ENCODE measurements at regions of chr1 and their contacts with region 1.

Region 1: GRCh38 chr1:28505406-28506187 is at the start of gene RCC1:
- DNase-seq: peak; percentile 89 to 99 (median 94)
- ATAC-seq: peak; percentile 91
- H3K4me3 ChIP-seq: peak within 1 kb of the TSS; percentile 82 to 88
- H3K4me3 Mint-ChIP-seq: peak within 1 kb of the TSS; percentile 95
- H3K27ac ChIP-seq: peak within 1 kb of the TSS; percentile 77 to 85
- H3K27ac Mint-ChIP-seq: peak within 1 kb of the TSS; percentile 94
- H3K4me1 ChIP-seq: peaks cover 31% of the 10 kb centered on the region
- H3K4me1 Mint-ChIP-seq: peaks cover 45% of the 10 kb centered on the region
- H3K27me3 ChIP-seq: no peaks in the 10 kb centered on the region
- H3K27me3 Mint-ChIP-seq: no peaks in the 10 kb centered on the region
- CTCF ChIP-seq: no peak
- total RNA-seq, gene RCC1: 12.5 to 14.4 TPM

Region 2: DNA sequence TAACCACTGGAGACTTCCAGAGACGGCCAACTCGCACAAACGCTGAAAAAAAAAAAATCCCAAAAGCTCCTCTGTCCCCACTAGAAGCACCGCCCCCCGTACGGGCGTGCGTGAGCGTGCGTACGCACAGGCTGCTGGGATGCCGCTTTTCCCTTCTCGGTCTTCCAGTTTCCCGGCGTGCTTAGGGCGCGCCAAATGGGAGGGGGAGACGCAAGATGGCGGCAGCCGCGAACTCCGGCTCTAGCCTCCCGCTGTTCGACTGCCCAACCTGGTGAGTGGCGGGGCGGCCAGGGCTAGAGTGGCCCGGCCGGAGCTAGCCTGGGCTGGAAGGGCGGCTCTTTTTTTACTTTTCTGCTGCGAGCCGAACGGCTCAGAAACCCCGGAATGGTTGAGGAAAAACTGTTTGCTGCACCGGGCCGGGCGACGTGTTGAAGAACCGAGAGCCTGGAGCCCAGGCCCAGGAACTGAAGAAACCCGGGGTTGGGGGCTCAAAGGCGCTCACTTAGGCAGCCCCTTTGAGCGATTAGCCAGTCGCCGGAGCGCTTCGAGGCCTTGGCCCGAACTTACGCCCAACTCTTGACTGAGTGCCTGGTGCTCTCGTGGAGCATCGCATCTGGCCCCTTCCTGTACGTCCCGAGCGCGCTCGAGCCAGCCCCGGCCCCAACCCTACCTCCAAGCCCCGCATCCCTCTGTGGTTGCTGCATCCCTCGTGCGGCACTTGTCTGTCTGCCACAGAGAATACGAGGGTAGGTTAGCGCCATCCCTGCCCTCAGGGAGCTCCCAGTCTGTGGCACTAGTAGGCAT is 674.8 kb before region 1 on chr1 and contains the start of gene PPP1R8:
- CTCF ChIA-PET with region 1: no interaction called
- POLR2A ChIA-PET with region 1: no interaction called
- intact Hi-C with region 1: loop called in 1 of 2 experiments (anchors 5 kb)
- DNase-seq: peak; percentile 69 to 96 (median 90)
- ATAC-seq: peak; percentile 99
- H3K4me3 ChIP-seq: peak within 1 kb of the TSS; percentile 91 to 99
- H3K4me3 Mint-ChIP-seq: peak within 1 kb of the TSS; percentile 91
- H3K27ac ChIP-seq: peak within 1 kb of the TSS; percentile 82 to 88
- H3K27ac Mint-ChIP-seq: peak within 1 kb of the TSS; percentile 91
- H3K4me1 ChIP-seq: peaks cover 25% of the 10 kb centered on the region
- H3K4me1 Mint-ChIP-seq: peaks cover 43% of the 10 kb centered on the region
- H3K27me3 ChIP-seq: no peaks in the 10 kb centered on the region
- H3K27me3 Mint-ChIP-seq: no peaks in the 10 kb centered on the region
- CTCF ChIP-seq: no peak
- total RNA-seq, gene PPP1R8: 24.9 to 25.3 TPM

Region 3: DNA sequence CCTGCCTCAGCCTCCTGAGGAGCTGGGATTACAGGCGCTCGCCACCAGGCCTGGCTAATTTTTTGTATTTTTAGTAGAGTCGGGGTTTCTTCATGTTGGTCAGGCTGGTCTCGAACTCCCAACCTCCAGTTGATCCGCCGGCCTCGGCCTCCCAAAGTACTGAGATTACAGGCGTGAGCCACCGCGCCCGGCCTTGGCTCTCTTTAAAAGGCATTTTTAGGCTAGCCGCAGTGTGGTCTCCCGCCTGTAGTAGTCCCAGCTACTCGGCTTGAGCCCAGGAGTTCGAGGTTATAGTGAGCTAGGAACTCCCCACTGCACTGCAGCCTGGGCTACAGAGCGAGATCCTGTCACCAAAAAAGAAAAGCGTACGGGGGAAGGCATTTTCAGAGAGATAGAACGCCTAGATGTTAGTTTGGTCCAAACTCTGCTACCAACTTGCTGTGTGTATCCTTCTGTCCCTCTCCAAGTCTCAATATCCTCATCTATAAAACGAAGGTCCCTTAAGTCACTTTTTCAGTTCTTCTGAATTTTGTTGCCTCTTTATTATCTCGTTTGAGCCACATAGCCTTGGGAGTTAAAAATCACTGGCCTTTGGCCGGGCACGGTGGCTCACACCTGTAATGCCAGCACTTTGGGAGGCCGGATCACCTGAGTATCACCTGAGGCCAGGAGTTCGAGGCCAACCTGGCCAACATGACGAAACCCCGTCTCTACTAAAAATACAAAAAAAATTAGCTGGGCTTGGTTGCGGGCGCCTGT is 176.0 kb before region 1 on chr1:
- CTCF ChIA-PET with region 1: no interaction called
- POLR2A ChIA-PET with region 1: interaction called, 5 read pairs
- intact Hi-C with region 1: loop called (anchors 1 to 2 kb)
- DNase-seq: peak in 6 of 9 experiments; percentile 18 to 72 (median 46)
- ATAC-seq: peak; percentile 20
- H3K4me3 ChIP-seq: peak overlapping the region; percentile 53 to 57
- H3K4me3 Mint-ChIP-seq: peak overlapping the region; percentile 95
- H3K27ac ChIP-seq: peak overlapping the region; percentile 84 to 86
- H3K27ac Mint-ChIP-seq: peak overlapping the region; percentile 98
- H3K4me1 ChIP-seq: peaks cover 20% of the 10 kb centered on the region
- H3K4me1 Mint-ChIP-seq: peaks cover 34% of the 10 kb centered on the region
- H3K27me3 ChIP-seq: no peaks in the 10 kb centered on the region
- H3K27me3 Mint-ChIP-seq: no peaks in the 10 kb centered on the region
- CTCF ChIP-seq: no peak

Region 4: DNA sequence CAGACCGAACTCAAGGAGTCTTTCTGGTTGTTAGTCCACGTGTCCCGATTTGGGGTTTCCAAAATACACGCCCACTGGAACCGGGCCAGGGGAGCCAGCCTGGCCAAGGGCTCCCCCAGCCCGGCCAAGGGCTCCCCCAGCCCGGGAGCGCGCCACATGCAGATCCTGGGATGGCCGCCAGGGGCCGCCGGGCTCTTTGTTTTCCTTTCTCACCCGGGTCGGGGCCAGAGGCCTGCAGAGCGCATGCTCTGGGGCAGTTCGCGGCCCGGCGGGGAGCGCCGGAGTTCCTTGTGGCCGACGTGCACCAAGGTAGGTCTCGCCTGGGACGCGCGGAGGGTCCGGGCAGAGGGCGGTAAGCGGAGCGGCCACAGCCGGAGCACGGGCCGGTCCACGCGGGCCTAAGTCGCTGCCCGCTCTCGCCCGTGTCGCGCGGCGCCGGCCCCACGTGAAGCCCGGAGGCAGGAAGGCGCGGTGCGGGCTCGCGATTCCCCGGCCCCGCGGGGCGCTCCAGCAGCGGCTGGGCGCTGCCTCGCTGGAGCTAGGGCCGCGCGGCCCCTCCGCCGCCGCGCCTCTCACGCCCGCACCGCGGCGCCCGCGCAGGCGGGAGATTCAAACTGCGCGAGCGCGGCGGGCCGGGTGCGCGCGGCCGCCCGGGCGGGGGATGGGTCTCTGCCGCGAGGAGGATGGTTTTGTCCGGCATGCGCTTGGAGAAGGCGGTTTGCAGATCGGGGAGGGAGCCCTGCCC is 12.6 kb after region 1 on chr1:
- CTCF ChIA-PET with region 1: interaction called, 11 read pairs
- POLR2A ChIA-PET with region 1: interaction called, 14 read pairs
- intact Hi-C with region 1: loop called (anchors 1 kb)
- DNase-seq: peak; percentile 76 to 93 (median 88)
- ATAC-seq: peak; percentile 91
- H3K4me3 ChIP-seq: peak overlapping the region; percentile 59 to 79
- H3K4me3 Mint-ChIP-seq: peak overlapping the region; percentile 89
- H3K27ac ChIP-seq: peak overlapping the region; percentile 55 to 57
- H3K27ac Mint-ChIP-seq: peak overlapping the region; percentile 84
- H3K4me1 ChIP-seq: peaks cover 21% of the 10 kb centered on the region
- H3K4me1 Mint-ChIP-seq: peaks cover 28% of the 10 kb centered on the region
- H3K27me3 ChIP-seq: no peaks in the 10 kb centered on the region
- H3K27me3 Mint-ChIP-seq: no peaks in the 10 kb centered on the region
- CTCF ChIP-seq: peak; percentile 98

Region 5: GRCh38 chr1:28530456-28530855 is 24.9 kb after region 1 on chr1:
- CTCF ChIA-PET with region 1: no interaction called
- POLR2A ChIA-PET with region 1: no interaction called
- intact Hi-C with region 1: no loop called
- DNase-seq: no peak
- ATAC-seq: no peak
- H3K4me3 ChIP-seq: no peak overlapping the region
- H3K4me3 Mint-ChIP-seq: no peak overlapping the region
- H3K27ac ChIP-seq: no peak overlapping the region
- H3K27ac Mint-ChIP-seq: no peak overlapping the region
- H3K4me1 ChIP-seq: no peaks in the 10 kb centered on the region
- H3K4me1 Mint-ChIP-seq: no peaks in the 10 kb centered on the region
- H3K27me3 ChIP-seq: no peaks in the 10 kb centered on the region
- H3K27me3 Mint-ChIP-seq: no peaks in the 10 kb centered on the region
- CTCF ChIP-seq: no peak

Region 6: DNA sequence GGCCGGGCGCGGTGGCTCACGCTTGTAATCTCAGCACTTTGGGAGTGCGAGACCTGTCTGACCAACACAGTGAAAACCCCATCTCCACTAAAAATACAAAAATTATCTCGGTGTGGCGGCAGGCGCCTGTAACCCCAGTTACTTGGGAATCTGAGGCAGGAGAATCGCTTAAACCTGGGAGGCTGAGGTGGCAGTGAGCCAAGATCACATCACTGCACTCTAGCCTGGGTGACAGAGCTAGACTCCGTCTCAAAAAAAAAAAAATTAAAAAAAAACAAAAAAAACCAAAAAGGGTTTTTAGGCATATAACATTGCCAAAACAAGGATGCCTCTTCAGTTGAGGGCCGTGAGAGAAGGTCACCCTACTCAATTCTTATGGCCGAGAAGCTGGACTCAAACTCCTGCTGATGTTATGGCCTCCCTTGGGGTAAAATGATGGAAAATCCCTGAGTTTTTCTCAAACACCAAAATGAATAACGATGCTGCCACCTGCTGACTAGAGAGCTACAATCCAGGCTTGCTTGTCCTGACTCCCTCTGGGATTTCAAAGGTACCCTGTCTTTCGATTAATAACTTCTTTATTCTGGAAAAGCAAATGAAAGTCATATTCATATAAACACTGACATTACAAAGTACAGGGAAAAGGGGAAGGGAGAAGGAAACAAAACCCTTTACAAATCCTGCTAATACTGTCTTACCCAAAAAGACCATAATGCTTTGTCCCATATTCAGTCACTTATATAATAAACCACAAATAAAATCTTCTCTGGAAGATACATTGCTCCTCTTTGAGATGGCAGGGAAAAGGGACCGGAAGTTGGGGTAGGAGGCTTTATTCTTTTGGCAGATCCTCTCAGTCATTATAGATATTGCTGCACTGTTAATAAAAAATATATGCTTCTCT is 97.2 kb after region 1 on chr1:
- CTCF ChIA-PET with region 1: no interaction called
- POLR2A ChIA-PET with region 1: no interaction called
- intact Hi-C with region 1: no loop called
- DNase-seq: peak in 4 of 9 experiments; percentile 24 to 62 (median 46)
- ATAC-seq: no peak
- H3K4me3 ChIP-seq: no peak overlapping the region
- H3K4me3 Mint-ChIP-seq: no peak overlapping the region
- H3K27ac ChIP-seq: no peak overlapping the region
- H3K27ac Mint-ChIP-seq: no peak overlapping the region
- H3K4me1 ChIP-seq: no peaks in the 10 kb centered on the region
- H3K4me1 Mint-ChIP-seq: no peaks in the 10 kb centered on the region
- H3K27me3 ChIP-seq: no peaks in the 10 kb centered on the region
- H3K27me3 Mint-ChIP-seq: no peaks in the 10 kb centered on the region
- CTCF ChIP-seq: peak; percentile 31

Region 7: DNA sequence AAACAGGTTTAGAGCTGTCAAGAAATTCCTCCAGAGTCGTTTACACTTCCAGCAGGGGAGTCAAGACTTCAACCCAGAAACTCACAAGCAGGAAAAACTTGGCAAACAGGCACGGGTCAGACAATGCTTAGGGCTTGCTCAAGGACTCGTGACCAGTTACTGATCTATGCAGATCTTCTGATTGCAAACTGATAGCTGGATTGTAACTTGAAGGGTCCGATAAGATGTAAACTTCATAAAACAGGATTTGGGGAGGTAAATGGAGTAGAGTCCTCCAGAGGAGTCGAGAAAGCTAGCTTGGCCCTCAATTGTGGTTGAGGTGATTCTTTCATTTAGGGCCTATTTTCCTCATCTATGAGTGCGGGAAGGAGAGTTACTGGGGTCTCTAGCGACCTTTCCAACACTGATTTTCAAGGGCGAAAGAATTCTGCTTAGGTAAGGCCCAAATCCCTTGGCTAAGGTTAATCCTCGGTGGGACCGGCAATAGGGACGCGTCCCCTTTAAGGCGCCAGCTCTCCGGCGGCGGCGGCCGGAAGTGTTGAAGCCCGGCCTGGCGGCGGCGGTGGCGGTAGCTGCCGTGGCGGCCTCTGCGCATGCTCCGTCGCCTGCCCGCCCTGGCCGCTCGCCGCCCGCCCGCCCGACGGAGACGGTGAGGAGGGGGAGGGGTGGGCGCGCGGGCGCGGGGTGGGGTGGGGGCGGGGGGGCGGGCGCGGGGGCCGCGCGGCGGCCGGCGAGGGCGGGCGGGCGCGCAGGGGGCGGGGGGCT is 162.8 kb after region 1 on chr1 and contains the start of gene GMEB1:
- CTCF ChIA-PET with region 1: no interaction called
- POLR2A ChIA-PET with region 1: interaction called, 5 read pairs
- intact Hi-C with region 1: loop called in 1 of 2 experiments (anchors 1 kb)
- DNase-seq: peak; percentile 66 to 91 (median 82)
- ATAC-seq: peak; percentile 61
- H3K4me3 ChIP-seq: peak within 1 kb of the TSS; percentile 83 to 98
- H3K4me3 Mint-ChIP-seq: peak within 1 kb of the TSS; percentile 92
- H3K27ac ChIP-seq: peak within 1 kb of the TSS; percentile 81 to 98
- H3K27ac Mint-ChIP-seq: peak within 1 kb of the TSS; percentile 97
- H3K4me1 ChIP-seq: peaks cover 9% of the 10 kb centered on the region
- H3K4me1 Mint-ChIP-seq: peaks cover 22% of the 10 kb centered on the region
- H3K27me3 ChIP-seq: no peaks in the 10 kb centered on the region
- H3K27me3 Mint-ChIP-seq: no peaks in the 10 kb centered on the region
- CTCF ChIP-seq: no peak
- total RNA-seq, gene GMEB1: 12.9 to 13.6 TPM

Region 8: GRCh38 chr1:28822788-28823187 is 317.2 kb after region 1 on chr1:
- CTCF ChIA-PET with region 1: no interaction called
- POLR2A ChIA-PET with region 1: no interaction called
- intact Hi-C with region 1: no loop called
- DNase-seq: no peak
- ATAC-seq: no peak
- H3K4me3 ChIP-seq: no peak overlapping the region
- H3K4me3 Mint-ChIP-seq: no peak overlapping the region
- H3K27ac ChIP-seq: no peak overlapping the region
- H3K27ac Mint-ChIP-seq: no peak overlapping the region
- H3K4me1 ChIP-seq: no peaks in the 10 kb centered on the region
- H3K4me1 Mint-ChIP-seq: no peaks in the 10 kb centered on the region
- H3K27me3 ChIP-seq: no peaks in the 10 kb centered on the region
- H3K27me3 Mint-ChIP-seq: peaks cover 4% of the 10 kb centered on the region
- CTCF ChIP-seq: no peak

Region 9: GRCh38 chr1:29341936-29342335 is 836.3 kb after region 1 on chr1:
- CTCF ChIA-PET with region 1: no interaction called
- POLR2A ChIA-PET with region 1: no interaction called
- intact Hi-C with region 1: no loop called
- DNase-seq: no peak
- ATAC-seq: no peak
- H3K4me3 ChIP-seq: no peak overlapping the region
- H3K4me3 Mint-ChIP-seq: no peak overlapping the region
- H3K27ac ChIP-seq: no peak overlapping the region
- H3K27ac Mint-ChIP-seq: no peak overlapping the region
- H3K4me1 ChIP-seq: no peaks in the 10 kb centered on the region
- H3K4me1 Mint-ChIP-seq: no peaks in the 10 kb centered on the region
- H3K27me3 ChIP-seq: no peaks in the 10 kb centered on the region
- H3K27me3 Mint-ChIP-seq: peaks cover 42% of the 10 kb centered on the region
- CTCF ChIP-seq: no peak